IMR-90 (cell line): ENCODE measurements at regions of chr10 and their contacts with region 1.

Region 1: DNA sequence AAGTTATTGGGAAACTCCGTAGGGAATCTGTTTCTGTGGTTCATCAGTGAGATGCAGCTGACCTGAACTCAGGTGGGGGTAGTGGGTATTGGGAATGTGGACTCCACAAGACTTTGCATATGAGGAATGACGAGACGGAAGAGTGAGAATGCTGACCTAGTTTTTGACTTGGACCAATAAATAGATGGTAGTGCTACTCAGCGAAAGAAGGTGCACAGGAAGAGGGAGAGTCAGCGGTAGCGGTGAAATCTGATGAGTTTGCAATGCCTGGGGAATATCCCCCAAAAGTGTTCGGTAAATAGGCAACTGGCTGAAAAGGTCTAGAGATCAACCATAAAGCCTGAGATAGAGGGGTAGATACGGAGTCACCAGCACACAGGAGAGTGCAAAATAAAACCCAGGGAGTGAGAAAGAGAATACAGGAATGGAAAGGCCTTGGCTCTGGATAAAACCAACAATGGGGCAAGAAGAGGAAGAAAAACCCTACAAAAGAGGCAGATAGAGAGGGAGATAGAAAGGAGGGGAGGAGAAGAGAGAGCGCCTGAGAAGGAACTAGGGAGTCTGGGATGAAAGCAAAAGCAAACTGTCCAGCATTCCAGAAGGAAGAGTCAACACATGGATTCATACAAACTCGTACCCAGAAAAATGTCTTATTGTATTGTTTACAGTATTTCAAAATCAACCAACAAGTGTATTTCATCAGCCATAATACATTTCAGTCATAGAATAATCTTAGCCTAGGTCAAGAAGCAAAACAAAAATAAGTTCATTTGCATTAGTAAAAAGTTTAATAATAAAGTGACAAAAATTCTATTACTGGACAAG is 5.4 kb downstream of the ARHGAP21 start:
- DNase-seq: peak; percentile 90
- ATAC-seq: peak; percentile 63
- H3K4me3 ChIP-seq: peak overlapping the region; percentile 1; the same call in 1 of the 2 replicates
- H3K27ac ChIP-seq: peak overlapping the region; percentile 73
- H3K4me1 ChIP-seq: peaks cover 17% of the 10 kb centered on the region
- H3K27me3 ChIP-seq: no peaks in the 10 kb centered on the region
- CTCF ChIP-seq: no peak
- POLR2A ChIP-seq: no peak
- RAD21 ChIP-seq: no peak

Region 2: GRCh38 chr10:24488631-24489030 is 229.6 kb before region 1 on chr10:
- CTCF ChIA-PET with region 1: no interaction called
- POLR2A ChIA-PET with region 1: interaction called, 20 read pairs
- dilution Hi-C with region 1: no loop called
- in situ Hi-C with region 1: no loop called
- intact Hi-C with region 1: no loop called
- DNase-seq: no peak
- ATAC-seq: no peak
- H3K4me3 ChIP-seq: no peak overlapping the region
- H3K27ac ChIP-seq: no peak overlapping the region
- H3K4me1 ChIP-seq: peaks cover 2% of the 10 kb centered on the region
- H3K27me3 ChIP-seq: no peaks in the 10 kb centered on the region
- CTCF ChIP-seq: no peak
- POLR2A ChIP-seq: no peak
- RAD21 ChIP-seq: no peak

Region 3: GRCh38 chr10:25842146-25842545 is 1123.9 kb after region 1 on chr10:
- CTCF ChIA-PET with region 1: no interaction called
- POLR2A ChIA-PET with region 1: no interaction called
- dilution Hi-C with region 1: no loop called
- in situ Hi-C with region 1: no loop called
- intact Hi-C with region 1: no loop called
- DNase-seq: no peak
- ATAC-seq: no peak
- H3K4me3 ChIP-seq: no peak overlapping the region
- H3K27ac ChIP-seq: no peak overlapping the region
- H3K4me1 ChIP-seq: no peaks in the 10 kb centered on the region
- H3K27me3 ChIP-seq: no peaks in the 10 kb centered on the region
- CTCF ChIP-seq: no peak
- POLR2A ChIP-seq: no peak
- RAD21 ChIP-seq: no peak